ENCODE measurements at regions of chr6 and their contacts with region 1.

Region 1: DNA sequence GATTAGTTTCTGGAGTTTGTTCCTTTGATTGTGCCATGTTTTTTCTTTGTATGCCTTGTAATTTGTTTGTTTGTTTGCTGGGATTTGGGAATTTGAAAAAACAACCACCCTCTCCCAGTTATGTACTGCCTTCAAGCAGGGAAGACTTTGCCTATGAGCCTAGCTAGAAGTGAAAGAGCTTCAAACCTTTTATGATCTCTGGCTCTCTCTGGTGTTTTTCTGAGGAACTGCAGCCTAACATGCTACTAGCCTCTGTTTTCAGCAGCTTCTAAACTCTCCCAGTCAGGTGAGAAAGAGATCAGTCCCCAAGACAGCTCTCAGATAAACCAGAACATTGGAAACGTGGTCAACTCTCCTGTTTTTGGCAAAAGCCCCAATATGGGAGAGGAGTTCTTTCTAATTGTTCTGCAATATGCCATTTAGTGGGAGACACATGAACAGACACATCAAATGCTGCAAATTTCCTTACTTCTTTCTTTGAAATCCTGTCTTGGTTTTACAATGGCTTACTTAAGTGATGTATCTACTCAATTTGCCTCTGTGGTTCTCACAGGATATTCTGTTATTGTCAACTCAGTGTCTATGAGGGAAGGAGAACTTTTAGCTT is 58.9 kb upstream of the SERINC1 start:
- DNase-seq: no peak
- ATAC-seq: peak; percentile 94
- H3K4me3 Mint-ChIP-seq: no peak overlapping the region
- H3K27ac Mint-ChIP-seq: no peak overlapping the region
- H3K4me1 Mint-ChIP-seq: no peaks in the 10 kb centered on the region
- H3K27me3 Mint-ChIP-seq: peaks cover 16% of the 10 kb centered on the region
- CTCF ChIP-seq: peak; percentile 60

Region 2: GRCh38 chr6:122381497-122382265 is 148.9 kb before region 1 on chr6:
- CTCF ChIA-PET with region 1: interaction called, 94 read pairs
- POLR2A ChIA-PET with region 1: no interaction called
- intact Hi-C with region 1: loop called (anchors 1 kb)
- DNase-seq: no peak
- ATAC-seq: peak; percentile 77
- H3K4me3 Mint-ChIP-seq: no peak overlapping the region
- H3K27ac Mint-ChIP-seq: no peak overlapping the region
- H3K4me1 Mint-ChIP-seq: no peaks in the 10 kb centered on the region
- H3K27me3 Mint-ChIP-seq: peaks cover 15% of the 10 kb centered on the region
- CTCF ChIP-seq: peak; percentile 40

Region 3: GRCh38 chr6:122484760-122485159 is 45.8 kb before region 1 on chr6:
- CTCF ChIA-PET with region 1: interaction called, 137 read pairs
- POLR2A ChIA-PET with region 1: no interaction called
- intact Hi-C with region 1: no loop called
- DNase-seq: no peak
- ATAC-seq: peak; percentile 87
- H3K4me3 Mint-ChIP-seq: no peak overlapping the region
- H3K27ac Mint-ChIP-seq: peak overlapping the region; percentile 27
- H3K4me1 Mint-ChIP-seq: peaks cover 6% of the 10 kb centered on the region
- H3K27me3 Mint-ChIP-seq: no peaks in the 10 kb centered on the region
- CTCF ChIP-seq: no peak

Region 4: GRCh38 chr6:122491919-122492555 is 38.5 kb before region 1 on chr6:
- CTCF ChIA-PET with region 1: interaction called, 137 read pairs
- POLR2A ChIA-PET with region 1: no interaction called
- intact Hi-C with region 1: loop called (anchors 1 kb)
- DNase-seq: peak; percentile 27
- ATAC-seq: peak; percentile 100
- H3K4me3 Mint-ChIP-seq: peak overlapping the region; percentile 3
- H3K27ac Mint-ChIP-seq: no peak overlapping the region
- H3K4me1 Mint-ChIP-seq: peaks cover 12% of the 10 kb centered on the region
- H3K27me3 Mint-ChIP-seq: peaks cover under 1% of the 10 kb centered on the region
- CTCF ChIP-seq: no peak

Region 5: GRCh38 chr6:122520179-122520578 is 10.4 kb before region 1 on chr6:
- CTCF ChIA-PET with region 1: interaction called, 20 read pairs
- POLR2A ChIA-PET with region 1: no interaction called
- intact Hi-C with region 1: no loop called
- DNase-seq: no peak
- ATAC-seq: no peak
- H3K4me3 Mint-ChIP-seq: no peak overlapping the region
- H3K27ac Mint-ChIP-seq: no peak overlapping the region
- H3K4me1 Mint-ChIP-seq: no peaks in the 10 kb centered on the region
- H3K27me3 Mint-ChIP-seq: peaks cover 3% of the 10 kb centered on the region
- CTCF ChIP-seq: no peak